ENCODE measurements at regions of chr22 and their contacts with region 1.

Region 1: DNA sequence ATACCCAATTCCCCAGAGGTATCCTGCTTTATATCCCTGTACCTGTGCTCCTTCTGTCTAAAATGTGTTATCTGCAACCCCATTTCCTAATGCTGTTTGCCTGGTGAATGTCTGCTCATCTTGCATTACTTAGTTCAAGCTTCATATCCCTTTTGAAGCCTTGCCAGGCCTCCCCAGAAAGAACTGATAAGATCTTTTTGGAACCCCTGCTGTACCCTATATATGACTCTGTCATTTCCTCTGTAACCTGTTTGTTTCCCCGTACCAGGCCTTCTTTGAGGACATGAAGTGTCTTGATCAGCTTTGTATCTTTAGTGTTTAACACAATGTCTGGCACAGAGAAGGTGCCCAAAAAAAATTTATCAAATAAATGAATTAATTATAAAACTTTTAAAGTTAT is 77.6 kb downstream of the LIF start:
- DNase-seq: no peak
- H3K4me3 Mint-ChIP-seq: no peak overlapping the region
- H3K27ac Mint-ChIP-seq: no peak overlapping the region
- H3K4me1 Mint-ChIP-seq: peaks cover 9% of the 10 kb centered on the region
- H3K27me3 Mint-ChIP-seq: peaks cover 2% of the 10 kb centered on the region

Region 2: GRCh38 chr22:30079952-30080533 is 89.0 kb before region 1 on chr22 and contains the start of gene HORMAD2:
- CTCF ChIA-PET with region 1: no interaction called
- POLR2A ChIA-PET with region 1: no interaction called
- intact Hi-C with region 1: no loop called
- DNase-seq: no peak
- H3K4me3 Mint-ChIP-seq: no peak within 1 kb of the TSS
- H3K27ac Mint-ChIP-seq: no peak within 1 kb of the TSS
- H3K4me1 Mint-ChIP-seq: peaks cover 20% of the 10 kb centered on the region
- H3K27me3 Mint-ChIP-seq: no peaks in the 10 kb centered on the region
- total RNA-seq, gene HORMAD2: not detected

Region 3: DNA sequence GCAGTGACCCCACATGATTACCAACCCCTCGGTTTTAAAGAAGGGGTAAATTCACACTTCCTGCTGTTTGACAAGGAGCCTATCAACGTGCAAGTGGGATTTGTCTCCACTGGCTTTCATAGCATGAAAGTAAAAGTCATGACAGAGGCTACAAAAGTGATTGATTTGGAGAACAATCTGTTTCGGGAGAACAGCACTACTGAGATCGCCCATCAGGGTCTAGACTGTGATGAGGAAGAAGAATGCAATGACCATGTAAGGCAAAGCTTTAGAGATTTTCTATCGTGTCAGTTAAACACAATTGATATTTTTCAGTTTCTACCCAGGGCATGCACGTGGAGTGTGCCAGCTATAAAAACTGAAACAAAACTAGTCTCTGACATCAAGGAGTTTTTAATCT is 47.0 kb before region 1 on chr22:
- CTCF ChIA-PET with region 1: no interaction called
- POLR2A ChIA-PET with region 1: no interaction called
- intact Hi-C with region 1: loop called (anchors 5 kb)
- DNase-seq: peak; percentile 21
- H3K4me3 Mint-ChIP-seq: no peak overlapping the region
- H3K27ac Mint-ChIP-seq: peak overlapping the region; percentile 11
- H3K4me1 Mint-ChIP-seq: peaks cover 19% of the 10 kb centered on the region
- H3K27me3 Mint-ChIP-seq: no peaks in the 10 kb centered on the region

Region 4: GRCh38 chr22:30196141-30196879 is 27.3 kb after region 1 on chr22:
- CTCF ChIA-PET with region 1: interaction called, 3 read pairs
- POLR2A ChIA-PET with region 1: interaction called, 5 read pairs
- intact Hi-C with region 1: loop called (anchors 1 kb)
- DNase-seq: peak; percentile 84
- H3K4me3 Mint-ChIP-seq: peak overlapping the region; percentile 56
- H3K27ac Mint-ChIP-seq: peak overlapping the region; percentile 97
- H3K4me1 Mint-ChIP-seq: peaks cover 70% of the 10 kb centered on the region
- H3K27me3 Mint-ChIP-seq: no peaks in the 10 kb centered on the region

Region 5: DNA sequence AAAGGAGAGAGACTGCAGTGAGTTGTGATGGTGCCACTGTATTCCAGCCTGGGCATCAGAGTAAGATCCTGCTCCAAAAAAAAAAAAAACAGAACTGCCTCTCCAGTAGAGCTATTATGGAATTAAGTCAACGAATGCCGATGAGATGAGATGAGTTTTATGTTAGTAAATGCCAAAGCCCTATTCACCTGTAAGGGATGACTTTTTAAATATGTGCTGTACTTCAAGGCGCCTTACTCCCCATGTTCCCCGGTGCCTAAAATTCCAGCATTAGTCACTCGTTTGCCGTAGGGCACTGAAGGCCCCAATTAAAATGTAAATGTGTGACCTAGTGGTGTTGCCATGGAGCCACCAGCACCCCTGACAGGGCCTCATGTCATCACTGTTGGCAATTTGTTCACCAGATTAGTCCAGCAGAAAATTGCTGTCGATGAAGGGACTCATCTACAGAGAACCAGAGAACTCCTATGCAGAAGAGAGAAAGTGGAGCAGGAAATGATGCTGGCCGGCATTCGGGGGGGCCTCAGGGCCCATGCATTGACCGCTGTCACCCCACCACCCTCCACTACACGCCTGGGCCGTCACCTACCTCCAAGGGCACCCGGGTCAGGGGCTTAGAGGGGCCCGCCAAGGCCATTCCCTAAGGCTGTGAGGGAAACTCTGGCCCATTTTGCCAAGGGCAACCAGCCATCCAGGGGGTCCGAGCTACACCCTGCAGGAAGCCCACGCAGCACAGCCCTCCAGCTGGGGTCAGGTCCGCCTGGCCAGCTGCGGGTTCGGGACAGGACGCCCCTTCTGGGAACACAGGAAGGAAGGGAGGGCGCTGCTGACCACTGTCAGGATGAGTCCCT is 59.7 kb after region 1 on chr22:
- CTCF ChIA-PET with region 1: no interaction called
- POLR2A ChIA-PET with region 1: no interaction called
- intact Hi-C with region 1: no loop called
- DNase-seq: no peak
- H3K4me3 Mint-ChIP-seq: no peak overlapping the region
- H3K27ac Mint-ChIP-seq: no peak overlapping the region
- H3K4me1 Mint-ChIP-seq: peaks cover 25% of the 10 kb centered on the region
- H3K27me3 Mint-ChIP-seq: no peaks in the 10 kb centered on the region